Sigmoid colon (tissue), 7 donors: ENCODE measurements at regions of chr3 and their contacts with region 1.

Region 1: GRCh38 chr3:75294124-75294523 is 370.0 kb upstream of the FRG2C start:
- DNase-seq: peak; percentile 72
- H3K4me3 ChIP-seq: no peak overlapping the region
- H3K27ac ChIP-seq: no peak overlapping the region
- H3K4me1 ChIP-seq: no peaks in the 10 kb centered on the region
- H3K27me3 ChIP-seq: no peaks in the 10 kb centered on the region
- CTCF ChIP-seq: peak; percentile 40 to 65 (median 56)
- EP300 ChIP-seq: no peak
- POLR2A ChIP-seq: no peak

Region 2: DNA sequence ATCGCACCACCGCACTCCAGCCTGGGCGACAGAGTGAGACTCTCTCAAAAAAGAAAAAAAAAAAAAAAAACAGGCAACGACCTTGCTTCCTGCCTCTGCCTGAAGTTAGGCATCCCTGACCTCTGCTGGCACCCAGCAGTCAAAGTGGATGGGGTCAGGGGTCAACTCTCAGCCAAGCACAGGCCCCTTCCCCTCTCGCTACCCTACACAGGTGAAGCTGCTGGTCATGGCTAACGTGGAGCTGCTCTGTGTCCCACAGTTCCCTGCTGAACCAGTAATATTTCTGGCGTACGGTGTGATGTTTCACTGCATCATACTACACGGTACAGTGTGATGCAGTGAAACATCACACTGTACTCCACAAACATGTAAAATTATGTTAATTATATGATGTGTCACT is 356.1 kb after region 1 on chr3:
- intact Hi-C with region 1: loop called (anchors 10 kb)
- DNase-seq: no peak
- H3K4me3 ChIP-seq: no peak overlapping the region
- H3K27ac ChIP-seq: no peak overlapping the region
- H3K4me1 ChIP-seq: peaks cover 0 to under 1% (median 0%) of the 10 kb centered on the region in 4 donors
- H3K27me3 ChIP-seq: peaks cover 3 to 14% (median 4%) of the 10 kb centered on the region in 3 donors
- CTCF ChIP-seq: no peak
- EP300 ChIP-seq: no peak
- POLR2A ChIP-seq: no peak

Region 3: DNA sequence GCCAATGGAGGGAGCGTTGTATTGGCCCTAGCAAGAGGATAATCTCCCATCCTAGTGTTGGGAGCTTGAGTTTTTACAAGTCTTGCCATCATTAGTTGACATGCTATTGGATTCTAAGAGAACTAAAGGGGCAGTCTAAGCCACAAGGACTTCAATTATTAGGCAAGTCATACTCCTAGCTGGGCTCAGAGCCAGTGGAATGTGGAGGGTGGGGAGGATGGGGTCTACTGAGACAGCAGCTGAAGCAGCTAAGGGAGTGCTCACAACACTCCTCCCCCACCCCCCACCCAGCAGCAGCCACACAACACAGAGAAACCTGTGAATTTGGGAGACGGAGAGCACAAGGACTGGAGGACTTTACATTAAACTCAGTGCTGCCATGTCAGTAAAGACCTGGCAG is 397.9 kb after region 1 on chr3:
- intact Hi-C with region 1: no loop called
- DNase-seq: no peak
- H3K4me3 ChIP-seq: no peak overlapping the region
- H3K27ac ChIP-seq: no peak overlapping the region
- H3K4me1 ChIP-seq: no peaks in the 10 kb centered on the region
- H3K27me3 ChIP-seq: no peaks in the 10 kb centered on the region
- CTCF ChIP-seq: no peak
- EP300 ChIP-seq: no peak
- POLR2A ChIP-seq: no peak

Region 4: DNA sequence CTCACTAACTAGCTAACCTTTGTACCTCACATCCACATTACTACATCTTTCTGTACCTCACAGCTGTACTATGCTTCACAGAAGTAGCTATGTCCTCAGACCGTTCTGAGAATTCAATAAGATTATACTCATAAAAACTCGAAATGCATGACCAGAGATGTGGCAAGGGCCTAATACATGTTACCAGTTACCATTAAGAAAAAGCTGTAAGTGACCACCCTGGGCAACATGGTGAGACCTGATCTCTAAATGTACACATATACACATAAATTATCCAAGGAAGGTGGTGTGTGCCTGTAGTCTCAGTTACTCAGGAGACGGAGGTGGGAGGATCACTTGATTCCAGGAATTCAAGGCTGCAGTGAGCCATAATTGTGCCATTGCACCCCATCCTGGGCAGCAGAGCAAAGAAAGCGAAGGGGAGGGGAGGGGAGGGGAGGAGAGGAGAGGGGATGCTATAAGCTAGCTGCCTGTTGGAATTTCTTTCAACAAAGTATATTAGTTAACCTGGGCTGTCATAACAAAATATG is 973.8 kb after region 1 on chr3:
- intact Hi-C with region 1: no loop called
- DNase-seq: no peak
- H3K4me3 ChIP-seq: no peak overlapping the region
- H3K27ac ChIP-seq: no peak overlapping the region
- H3K4me1 ChIP-seq: no peaks in the 10 kb centered on the region
- H3K27me3 ChIP-seq: no peaks in the 10 kb centered on the region
- CTCF ChIP-seq: no peak
- EP300 ChIP-seq: no peak
- POLR2A ChIP-seq: no peak